MCF 10A (cell line): ENCODE measurements at regions of chr3 and their contacts with region 1.

Region 1: GRCh38 chr3:167734498-167735232 is at the start of gene PDCD10:
- DNase-seq: peak; percentile 100
- H3K4me3 Mint-ChIP-seq: no peak within 1 kb of the TSS
- H3K27ac Mint-ChIP-seq: no peak within 1 kb of the TSS
- H3K4me1 Mint-ChIP-seq: peaks cover 22% of the 10 kb centered on the region
- H3K27me3 Mint-ChIP-seq: no peaks in the 10 kb centered on the region
- CTCF ChIP-seq: no peak
- total RNA-seq, gene PDCD10: 62.9 and 63.3 TPM in 2 replicates

Region 2: DNA sequence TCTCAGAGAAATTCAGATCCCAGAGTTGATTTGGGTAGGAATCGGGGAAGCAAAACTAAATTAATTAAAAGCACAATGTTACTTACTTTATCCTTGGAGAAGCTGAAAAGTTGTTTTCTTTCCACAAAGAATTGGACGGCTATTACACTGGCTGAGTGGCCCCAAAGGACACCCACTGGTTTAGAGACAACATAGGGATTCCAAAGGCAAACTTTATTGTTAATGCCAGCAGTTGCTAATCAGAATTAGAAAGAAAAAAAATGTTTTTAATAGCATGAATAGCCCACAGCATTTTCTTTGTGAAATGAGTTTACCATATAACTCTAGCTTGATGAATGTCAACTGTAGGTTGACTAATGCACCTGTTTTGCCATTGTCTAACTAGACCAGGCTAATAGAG is 132.6 kb before region 1 on chr3:
- CTCF ChIA-PET with region 1: no interaction called
- POLR2A ChIA-PET with region 1: no interaction called
- intact Hi-C with region 1: loop called (anchors 5 kb)
- DNase-seq: no peak
- H3K4me3 Mint-ChIP-seq: no peak overlapping the region
- H3K27ac Mint-ChIP-seq: no peak overlapping the region
- H3K4me1 Mint-ChIP-seq: no peaks in the 10 kb centered on the region
- H3K27me3 Mint-ChIP-seq: peaks cover 33% of the 10 kb centered on the region
- CTCF ChIP-seq: no peak

Region 3: GRCh38 chr3:167750272-167750971 is 15.8 kb after region 1 on chr3:
- CTCF ChIA-PET with region 1: interaction called, 6 read pairs
- POLR2A ChIA-PET with region 1: interaction called, 19 read pairs
- intact Hi-C with region 1: no loop called
- DNase-seq: no peak
- H3K4me3 Mint-ChIP-seq: no peak overlapping the region
- H3K27ac Mint-ChIP-seq: no peak overlapping the region
- H3K4me1 Mint-ChIP-seq: no peaks in the 10 kb centered on the region
- H3K27me3 Mint-ChIP-seq: no peaks in the 10 kb centered on the region
- CTCF ChIP-seq: no peak

Region 4: GRCh38 chr3:167861649-167862048 is 127.0 kb after region 1 on chr3:
- CTCF ChIA-PET with region 1: no interaction called
- POLR2A ChIA-PET with region 1: interaction called, 19 read pairs
- intact Hi-C with region 1: no loop called
- DNase-seq: peak; percentile 64
- H3K4me3 Mint-ChIP-seq: peak overlapping the region; percentile 9
- H3K27ac Mint-ChIP-seq: peak overlapping the region; percentile 36
- H3K4me1 Mint-ChIP-seq: peaks cover 21% of the 10 kb centered on the region
- H3K27me3 Mint-ChIP-seq: no peaks in the 10 kb centered on the region
- CTCF ChIP-seq: no peak